CD8-positive, alpha-beta T cell (primary cell): ENCODE measurements at regions of chr6 and their contacts with region 1.

Region 1: DNA sequence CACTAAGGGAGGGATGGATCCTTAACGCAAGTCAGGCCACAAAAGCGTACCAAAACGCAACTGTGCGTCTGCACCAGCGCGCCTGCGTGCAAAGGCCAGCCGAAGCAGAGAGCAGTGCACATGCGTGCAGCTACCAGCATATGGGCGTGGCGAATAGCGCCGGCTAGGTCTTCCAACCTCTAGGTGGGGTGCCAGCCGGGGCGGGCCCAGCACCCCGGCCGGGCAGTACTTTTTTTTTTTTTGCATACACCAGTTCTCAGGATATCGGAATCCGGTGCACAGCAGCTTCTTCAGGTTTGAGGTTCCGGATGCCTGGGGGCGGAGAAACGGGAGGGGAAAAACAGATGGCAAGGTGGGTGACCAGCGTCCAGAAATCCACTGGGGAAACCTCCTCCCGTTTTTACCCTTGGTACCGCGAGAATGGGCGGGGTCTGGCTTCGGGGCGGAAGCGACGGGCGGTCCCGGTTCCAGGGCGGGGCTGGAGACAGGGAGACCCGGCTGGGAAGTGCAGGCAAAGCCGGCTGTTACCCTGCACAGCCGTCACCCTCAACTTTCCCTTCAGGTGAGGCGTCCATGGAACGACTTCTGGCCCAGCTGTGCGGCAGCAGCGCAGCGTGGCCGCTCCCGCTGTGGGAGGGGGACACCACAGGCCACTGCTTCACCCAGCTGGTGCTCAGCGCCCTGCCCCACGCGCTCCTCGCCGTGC is at the start of gene ABCC10:
- DNase-seq: peak; percentile 89 to 98 (median 94)
- ATAC-seq: peak; percentile 94
- H3K4me3 ChIP-seq: peak within 1 kb of the TSS; percentile 78 to 91
- H3K4me3 Mint-ChIP-seq: peak within 1 kb of the TSS; percentile 94
- H3K27ac ChIP-seq: peak within 1 kb of the TSS; percentile 80 to 84
- H3K27ac Mint-ChIP-seq: peak within 1 kb of the TSS; percentile 98
- H3K4me1 ChIP-seq: peaks cover 11% of the 10 kb centered on the region
- H3K4me1 Mint-ChIP-seq: peaks cover 30% of the 10 kb centered on the region
- H3K27me3 ChIP-seq: no peaks in the 10 kb centered on the region
- H3K27me3 Mint-ChIP-seq: no peaks in the 10 kb centered on the region
- CTCF ChIP-seq: no peak
- total RNA-seq, gene ABCC10: 39.7 to 45.5 TPM

Region 2: DNA sequence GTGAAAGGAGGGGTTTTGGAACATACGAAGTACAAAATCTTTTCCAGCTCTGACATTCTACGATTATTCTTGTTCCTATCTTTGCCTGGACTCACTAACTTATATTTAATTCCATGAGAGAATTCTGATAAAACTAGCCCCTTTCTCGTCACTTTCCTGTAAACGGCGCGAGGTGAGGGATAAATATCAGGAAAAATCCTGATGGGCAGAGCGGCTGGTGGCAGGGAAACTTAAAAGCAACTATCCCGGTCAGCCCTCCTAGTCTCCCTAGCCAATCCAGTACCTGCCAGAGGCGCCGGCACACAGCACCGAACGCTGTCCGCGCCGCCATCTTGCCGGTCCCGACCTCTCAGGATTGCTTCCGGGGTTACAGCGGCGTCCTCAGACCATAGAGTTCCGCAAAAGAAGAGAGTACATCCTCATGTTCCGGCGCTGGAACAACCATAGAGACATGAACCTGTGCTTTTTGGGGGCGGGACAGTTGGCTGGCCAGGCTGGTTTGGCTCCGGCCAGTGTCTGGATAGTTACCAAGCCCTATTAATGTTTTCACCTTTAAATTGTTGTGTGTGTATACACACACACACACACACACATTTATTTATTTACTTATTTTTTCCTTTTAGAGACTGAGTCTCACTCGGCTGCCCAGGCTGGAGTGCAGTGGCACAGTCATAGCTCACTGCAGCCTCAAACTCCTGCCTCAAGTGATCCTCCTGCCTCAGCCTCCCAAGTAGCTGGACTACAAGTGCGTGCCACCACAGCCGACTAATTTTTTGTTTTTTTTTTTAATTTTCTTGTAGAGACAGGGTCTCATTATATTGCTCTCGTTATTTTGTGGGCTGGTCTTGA is 1209.8 kb before region 1 on chr6 and contains the start of gene MRPS10:
- CTCF ChIA-PET with region 1: no interaction called
- POLR2A ChIA-PET with region 1: interaction called, 3 read pairs
- intact Hi-C with region 1: loop called in 1 of 2 experiments (anchors 1 kb)
- DNase-seq: peak; percentile 81 to 95 (median 91)
- ATAC-seq: peak; percentile 99
- H3K4me3 ChIP-seq: peak within 1 kb of the TSS; percentile 70 to 93
- H3K4me3 Mint-ChIP-seq: peak within 1 kb of the TSS; percentile 99
- H3K27ac ChIP-seq: peak within 1 kb of the TSS; percentile 63 to 74
- H3K27ac Mint-ChIP-seq: peak within 1 kb of the TSS; percentile 97
- H3K4me1 ChIP-seq: peaks cover 8% of the 10 kb centered on the region
- H3K4me1 Mint-ChIP-seq: peaks cover 25% of the 10 kb centered on the region
- H3K27me3 ChIP-seq: no peaks in the 10 kb centered on the region
- H3K27me3 Mint-ChIP-seq: no peaks in the 10 kb centered on the region
- CTCF ChIP-seq: no peak
- total RNA-seq, gene MRPS10: 17.0 to 17.4 TPM

Region 3: GRCh38 chr6:43174263-43175112 is 253.1 kb before region 1 on chr6:
- CTCF ChIA-PET with region 1: no interaction called
- POLR2A ChIA-PET with region 1: no interaction called
- intact Hi-C with region 1: loop called (anchors 1 to 5 kb)
- DNase-seq: peak; percentile 77 to 98 (median 92)
- ATAC-seq: peak; percentile 52
- H3K4me3 ChIP-seq: peak overlapping the region; percentile 4 to 50
- H3K4me3 Mint-ChIP-seq: peak overlapping the region; percentile 63
- H3K27ac ChIP-seq: peak overlapping the region; percentile 62 to 89
- H3K27ac Mint-ChIP-seq: peak overlapping the region; percentile 95
- H3K4me1 ChIP-seq: peaks cover 40% of the 10 kb centered on the region
- H3K4me1 Mint-ChIP-seq: peaks cover 45% of the 10 kb centered on the region
- H3K27me3 ChIP-seq: no peaks in the 10 kb centered on the region
- H3K27me3 Mint-ChIP-seq: no peaks in the 10 kb centered on the region
- CTCF ChIP-seq: no peak

Region 4: GRCh38 chr6:43369174-43370022 is 58.2 kb before region 1 on chr6 and contains the start of gene ZNF318:
- CTCF ChIA-PET with region 1: interaction called, 3 read pairs
- POLR2A ChIA-PET with region 1: interaction called, 19 read pairs
- intact Hi-C with region 1: loop called (anchors 1 kb)
- DNase-seq: peak; percentile 85 to 98 (median 93)
- ATAC-seq: peak; percentile 95
- H3K4me3 ChIP-seq: peak within 1 kb of the TSS; percentile 69 to 81
- H3K4me3 Mint-ChIP-seq: peak within 1 kb of the TSS; percentile 89
- H3K27ac ChIP-seq: peak within 1 kb of the TSS; percentile 76 to 87
- H3K27ac Mint-ChIP-seq: peak within 1 kb of the TSS; percentile 96
- H3K4me1 ChIP-seq: peaks cover 33% of the 10 kb centered on the region
- H3K4me1 Mint-ChIP-seq: peaks cover 43% of the 10 kb centered on the region
- H3K27me3 ChIP-seq: no peaks in the 10 kb centered on the region
- H3K27me3 Mint-ChIP-seq: no peaks in the 10 kb centered on the region
- CTCF ChIP-seq: no peak
- total RNA-seq, gene ZNF318: 18.2 TPM

Region 5: DNA sequence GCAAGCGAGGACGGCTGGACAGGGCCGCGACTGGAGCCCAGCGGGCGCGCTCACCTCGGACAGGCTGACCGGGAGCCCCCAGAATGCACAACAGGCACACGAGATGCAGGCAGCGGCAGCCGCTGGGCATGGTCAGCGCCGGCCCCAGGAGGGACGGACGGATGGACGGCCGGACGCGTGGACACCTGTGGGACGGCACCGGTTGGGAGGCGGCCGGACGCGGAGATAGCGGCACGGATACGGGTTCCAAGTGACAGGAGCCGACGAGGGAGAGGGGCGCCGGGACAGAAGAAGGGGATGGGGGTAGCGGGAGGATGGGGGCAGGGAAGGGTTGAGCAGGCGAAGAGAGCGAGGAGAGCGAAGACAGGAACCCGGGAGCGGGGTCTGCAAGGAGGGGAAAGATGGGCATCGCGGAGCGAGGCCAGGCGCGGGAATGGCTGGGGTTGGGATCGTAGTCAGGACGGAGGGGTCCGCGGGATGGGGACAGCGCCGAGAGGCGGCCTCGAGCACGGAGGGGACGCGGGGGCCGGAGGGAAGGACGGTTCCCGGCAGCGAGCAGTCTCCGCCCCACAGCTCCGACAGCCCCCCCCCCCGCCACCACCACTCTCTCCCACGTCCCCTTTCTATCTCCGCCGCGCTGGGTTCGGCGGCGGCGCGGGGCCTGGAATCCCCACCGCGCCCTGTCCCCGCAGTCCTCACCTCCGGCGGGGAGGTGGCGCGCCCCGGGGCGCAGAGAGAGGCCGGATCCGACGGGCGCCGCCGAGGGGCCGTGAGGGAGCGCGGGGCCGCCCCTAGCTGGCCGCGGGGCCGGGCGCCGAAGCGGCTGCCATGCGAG is 27.4 kb after region 1 on chr6:
- CTCF ChIA-PET with region 1: interaction called, 5 read pairs
- POLR2A ChIA-PET with region 1: interaction called, 3 read pairs
- intact Hi-C with region 1: loop called in 1 of 2 experiments (anchors 2 kb)
- DNase-seq: peak in 7 of 9 experiments; percentile 17 to 69 (median 39)
- ATAC-seq: peak; percentile 51
- H3K4me3 ChIP-seq: peak overlapping the region; percentile 57 to 73
- H3K4me3 Mint-ChIP-seq: peak overlapping the region; percentile 82
- H3K27ac ChIP-seq: no peak overlapping the region
- H3K27ac Mint-ChIP-seq: peak overlapping the region; percentile 41
- H3K4me1 ChIP-seq: peaks cover 7% of the 10 kb centered on the region
- H3K4me1 Mint-ChIP-seq: peaks cover 15% of the 10 kb centered on the region
- H3K27me3 ChIP-seq: no peaks in the 10 kb centered on the region
- H3K27me3 Mint-ChIP-seq: no peaks in the 10 kb centered on the region
- CTCF ChIP-seq: peak; percentile 41

Region 6: GRCh38 chr6:43575772-43576551 is 148.4 kb after region 1 on chr6 and contains the starts of genes POLH and XPO5:
- CTCF ChIA-PET with region 1: no interaction called
- POLR2A ChIA-PET with region 1: no interaction called
- intact Hi-C with region 1: loop called in 1 of 2 experiments (anchors 5 kb)
- DNase-seq: peak; percentile 80 to 97 (median 90)
- ATAC-seq: peak; percentile 96
- H3K4me3 ChIP-seq: peak within 1 kb of the TSS; percentile 78 to 89
- H3K4me3 Mint-ChIP-seq: peak within 1 kb of the TSS; percentile 95
- H3K27ac ChIP-seq: peak within 1 kb of the TSS; percentile 55 to 66
- H3K27ac Mint-ChIP-seq: peak within 1 kb of the TSS; percentile 93
- H3K4me1 ChIP-seq: peaks cover 20% of the 10 kb centered on the region
- H3K4me1 Mint-ChIP-seq: peaks cover 36% of the 10 kb centered on the region
- H3K27me3 ChIP-seq: no peaks in the 10 kb centered on the region
- H3K27me3 Mint-ChIP-seq: no peaks in the 10 kb centered on the region
- CTCF ChIP-seq: no peak
- total RNA-seq, gene POLH: 3.4 to 3.7 TPM
- total RNA-seq, gene XPO5: 29.6 to 39.9 TPM